ENCODE measurements at regions of chr2 and their contacts with region 1.

Region 1: DNA sequence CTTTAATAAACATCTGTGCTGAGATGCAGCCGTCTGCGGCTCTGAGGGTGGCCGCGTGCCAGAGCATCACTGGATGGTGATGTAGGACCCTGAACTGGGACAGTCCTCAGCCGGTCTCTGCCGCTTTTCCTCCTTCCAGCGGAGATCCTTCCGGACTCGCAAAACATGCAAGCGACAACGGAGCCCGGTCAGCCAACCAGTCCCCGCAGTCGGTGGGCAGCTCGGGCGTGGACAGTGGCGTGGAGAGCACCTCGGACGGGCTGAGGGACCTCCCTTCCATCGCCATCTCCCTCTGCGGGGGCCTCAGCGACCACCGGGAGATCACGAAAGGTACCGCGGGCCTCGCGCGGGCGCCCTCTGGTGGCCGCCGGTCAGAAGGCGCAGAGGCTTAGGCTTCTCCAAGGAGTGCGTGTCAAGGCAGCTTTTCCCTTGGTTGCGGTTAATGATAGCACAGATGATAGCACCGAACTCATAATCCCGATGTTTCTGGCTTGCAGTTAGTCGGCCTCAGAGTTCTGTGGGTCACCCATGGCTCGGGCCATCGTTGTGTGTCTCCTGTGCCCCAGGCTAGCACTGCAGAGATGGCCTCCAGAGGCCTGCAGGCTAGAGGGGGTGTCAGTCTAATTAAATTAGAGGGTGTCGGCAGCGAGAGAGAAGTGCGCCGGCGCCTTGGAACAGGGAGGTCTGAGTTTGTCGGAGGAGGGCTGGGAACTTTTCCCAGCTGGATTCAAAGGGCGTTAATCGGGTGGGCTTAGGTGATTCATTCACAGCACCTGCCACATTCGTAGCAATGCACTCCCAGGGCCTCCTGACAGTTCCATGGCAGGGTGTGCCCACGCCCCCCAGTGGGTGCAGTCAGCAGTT is 38.5 kb downstream of the LPIN1 start:
- DNase-seq: peak in 9 of 10 donors; percentile 53 to 78 (median 66)
- H3K4me3 ChIP-seq: peak overlapping the region in 57 of 59 donors; percentile 5 to 71 (median 49)
- H3K27ac ChIP-seq: peak overlapping the region in 48 of 59 donors; percentile 0 to 78 (median 52)
- H3K27me3 ChIP-seq: no peaks in the 10 kb centered on the region
- CTCF ChIP-seq: peak; percentile 64 to 97 (median 94)

Region 2: GRCh38 chr2:11477994-11478393 is 307.0 kb before region 1 on chr2:
- intact Hi-C with region 1: loop called in 1 of 2 experiments (anchors 10 kb)
- DNase-seq: peak; percentile 85 to 98 (median 94)
- H3K4me3 ChIP-seq: no peak overlapping the region
- H3K27ac ChIP-seq: peak overlapping the region in 9 of 59 donors; percentile 0 to 44 (median 21)
- H3K27me3 ChIP-seq: no peaks in the 10 kb centered on the region
- CTCF ChIP-seq: peak; percentile 90 to 100 (median 97)